ENCODE measurements at regions of chr1 and their contacts with region 1.

Region 1: GRCh38 chr1:148353461-148354283 is 129.4 kb downstream of the PPIAL4G start:
- DNase-seq: peak; percentile 43
- CTCF ChIP-seq: no peak

Region 2: DNA sequence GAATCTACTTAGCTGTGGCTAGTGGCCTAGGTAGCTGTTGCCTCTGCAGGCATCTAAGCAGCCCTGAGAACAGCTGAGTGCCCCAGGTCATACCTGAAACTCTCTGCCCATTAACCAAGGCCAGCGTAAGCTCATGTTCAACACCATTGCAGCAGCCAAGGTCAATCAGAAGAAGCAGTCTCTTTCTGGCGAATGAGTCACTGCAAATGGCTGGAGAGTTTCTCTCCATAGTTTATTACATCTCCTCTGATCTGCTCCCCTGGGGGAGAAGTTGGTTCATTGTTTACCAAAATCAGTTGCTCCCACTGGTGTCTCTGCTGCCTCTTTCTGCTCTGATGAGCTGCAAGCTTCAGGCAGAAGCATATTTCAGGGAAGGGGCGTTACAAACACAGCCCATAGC is 819.3 kb before region 1 on chr1:
- in situ Hi-C with region 1: no loop called
- DNase-seq: no peak
- CTCF ChIP-seq: no peak

Region 3: GRCh38 chr1:148263128-148263905 is 90.4 kb before region 1 on chr1:
- in situ Hi-C with region 1: loop called (anchors 25 kb)
- DNase-seq: peak; percentile 83
- CTCF ChIP-seq: no peak